CD4-positive, alpha-beta memory T cell (primary cell): ENCODE measurements at regions of chr16 and their contacts with region 1.

Region 1: GRCh38 chr16:23435500-23435899 is 17.5 kb downstream of the COG7 start:
- DNase-seq: peak; percentile 56 to 71 (median 56)
- H3K4me3 ChIP-seq: no peak overlapping the region
- H3K4me3 Mint-ChIP-seq: no peak overlapping the region
- H3K27ac ChIP-seq: no peak overlapping the region
- H3K27ac Mint-ChIP-seq: peak overlapping the region in 2 of 7 donors; percentile 23 to 64
- H3K4me1 ChIP-seq: peaks cover 4% of the 10 kb centered on the region
- H3K4me1 Mint-ChIP-seq: peaks cover 0 to 13% (median 6%) of the 10 kb centered on the region in 4 donors
- H3K27me3 ChIP-seq: no peaks in the 10 kb centered on the region
- H3K27me3 Mint-ChIP-seq: no peaks in the 10 kb centered on the region

Region 2: GRCh38 chr16:22898874-22899348 is 536.6 kb before region 1 on chr16:
- CTCF ChIA-PET with region 1: no interaction called
- POLR2A ChIA-PET with region 1: no interaction called
- intact Hi-C with region 1: loop called (anchors 10 kb)
- DNase-seq: peak in 3 of 5 donors; percentile 5 to 12 (median 6)
- H3K4me3 ChIP-seq: no peak overlapping the region
- H3K4me3 Mint-ChIP-seq: no peak overlapping the region
- H3K27ac ChIP-seq: no peak overlapping the region
- H3K27ac Mint-ChIP-seq: no peak overlapping the region
- H3K4me1 ChIP-seq: no peaks in the 10 kb centered on the region
- H3K4me1 Mint-ChIP-seq: no peaks in the 10 kb centered on the region
- H3K27me3 ChIP-seq: peaks cover 4% of the 10 kb centered on the region
- H3K27me3 Mint-ChIP-seq: peaks cover 13 to 18% of the 10 kb centered on the region in 2 donors

Region 3: DNA sequence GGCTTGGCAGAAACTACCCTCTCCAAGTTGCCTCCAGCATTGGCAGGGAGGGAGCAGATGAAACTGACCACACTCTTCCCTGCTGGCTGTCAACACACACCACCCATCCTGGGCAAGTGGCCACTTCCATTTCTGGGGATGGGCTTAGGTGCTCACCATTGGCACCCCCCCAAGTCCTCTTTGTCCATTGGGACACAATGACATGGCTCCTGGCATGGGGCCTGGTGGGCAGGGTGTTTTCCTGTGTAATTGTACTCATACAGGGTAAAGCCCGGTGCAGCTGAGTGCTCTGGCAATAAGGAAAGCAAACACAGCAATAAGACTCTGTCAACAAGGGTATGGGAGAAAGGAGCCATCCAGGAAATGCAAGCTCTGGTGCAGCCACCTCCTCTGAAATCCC is 110.8 kb before region 1 on chr16:
- CTCF ChIA-PET with region 1: no interaction called
- POLR2A ChIA-PET with region 1: no interaction called
- intact Hi-C with region 1: no loop called
- DNase-seq: no peak
- H3K4me3 ChIP-seq: no peak overlapping the region
- H3K4me3 Mint-ChIP-seq: no peak overlapping the region
- H3K27ac ChIP-seq: no peak overlapping the region
- H3K27ac Mint-ChIP-seq: peak overlapping the region in 1 of 7 donors; percentile 20
- H3K4me1 ChIP-seq: no peaks in the 10 kb centered on the region
- H3K4me1 Mint-ChIP-seq: no peaks in the 10 kb centered on the region
- H3K27me3 ChIP-seq: no peaks in the 10 kb centered on the region
- H3K27me3 Mint-ChIP-seq: peaks cover 1 to 5% of the 10 kb centered on the region in 2 donors

Region 4: DNA sequence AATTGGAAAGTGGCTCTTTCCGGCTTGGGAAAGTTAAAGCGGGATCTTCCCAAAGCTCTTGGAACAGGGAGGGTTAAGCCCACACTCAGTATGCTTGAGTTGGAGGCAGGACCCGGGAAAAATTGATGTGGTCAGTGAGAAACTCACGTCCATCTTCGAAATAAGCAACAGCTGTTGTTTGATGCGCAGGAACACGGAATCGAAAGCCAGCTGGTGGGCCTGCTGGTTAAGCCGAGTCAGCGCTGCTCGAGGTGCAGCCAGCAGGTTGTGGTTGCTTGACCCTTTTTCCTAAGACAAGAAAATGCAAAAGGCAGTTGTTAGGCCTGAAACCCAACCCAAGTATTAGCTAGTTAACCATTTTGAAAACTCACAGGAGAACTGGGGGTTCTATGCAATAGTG is 32.0 kb before region 1 on chr16:
- CTCF ChIA-PET with region 1: interaction called, 14 read pairs
- POLR2A ChIA-PET with region 1: no interaction called
- intact Hi-C with region 1: no loop called
- DNase-seq: no peak
- H3K4me3 ChIP-seq: no peak overlapping the region
- H3K4me3 Mint-ChIP-seq: no peak overlapping the region
- H3K27ac ChIP-seq: no peak overlapping the region
- H3K27ac Mint-ChIP-seq: no peak overlapping the region
- H3K4me1 ChIP-seq: no peaks in the 10 kb centered on the region
- H3K4me1 Mint-ChIP-seq: no peaks in the 10 kb centered on the region
- H3K27me3 ChIP-seq: no peaks in the 10 kb centered on the region
- H3K27me3 Mint-ChIP-seq: no peaks in the 10 kb centered on the region

Region 5: DNA sequence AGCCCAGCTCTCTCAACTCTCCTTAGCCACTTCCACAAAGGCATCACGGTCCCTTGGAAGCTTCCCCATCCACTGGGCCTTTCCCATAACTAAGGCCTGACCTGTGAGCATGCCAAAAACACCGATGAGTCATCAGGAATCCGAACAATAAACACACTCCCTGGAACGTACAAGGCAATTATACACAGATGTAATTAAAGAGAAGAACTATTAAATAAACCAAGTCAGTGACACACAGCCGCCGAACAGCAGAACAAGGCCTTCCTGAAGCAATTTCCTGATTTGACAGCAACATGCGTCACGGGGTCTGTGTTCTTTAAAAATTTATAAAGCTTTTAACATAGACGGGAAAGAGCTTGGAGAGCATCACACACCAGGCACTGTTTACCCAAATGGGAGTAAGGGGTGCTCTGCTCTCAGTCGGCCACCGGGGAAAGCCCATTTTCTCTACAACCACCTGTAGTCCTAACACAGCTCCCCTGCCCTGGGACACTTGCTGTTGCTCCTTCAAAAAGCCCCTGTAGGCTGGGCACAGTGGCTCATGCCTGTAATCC is 11.9 kb before region 1 on chr16:
- CTCF ChIA-PET with region 1: interaction called, 42 read pairs
- POLR2A ChIA-PET with region 1: no interaction called
- intact Hi-C with region 1: no loop called
- DNase-seq: no peak
- H3K4me3 ChIP-seq: no peak overlapping the region
- H3K4me3 Mint-ChIP-seq: peak overlapping the region in 1 of 8 donors; percentile 27
- H3K27ac ChIP-seq: no peak overlapping the region
- H3K27ac Mint-ChIP-seq: no peak overlapping the region
- H3K4me1 ChIP-seq: no peaks in the 10 kb centered on the region
- H3K4me1 Mint-ChIP-seq: no peaks in the 10 kb centered on the region
- H3K27me3 ChIP-seq: no peaks in the 10 kb centered on the region
- H3K27me3 Mint-ChIP-seq: no peaks in the 10 kb centered on the region

Region 6: GRCh38 chr16:23478566-23479537 is 43.4 kb after region 1 on chr16:
- CTCF ChIA-PET with region 1: interaction called, 17 read pairs
- POLR2A ChIA-PET with region 1: no interaction called
- intact Hi-C with region 1: no loop called
- DNase-seq: no peak
- H3K4me3 ChIP-seq: no peak overlapping the region
- H3K4me3 Mint-ChIP-seq: no peak overlapping the region
- H3K27ac ChIP-seq: no peak overlapping the region
- H3K27ac Mint-ChIP-seq: peak overlapping the region in 6 of 7 donors; percentile 24 to 90 (median 48)
- H3K4me1 ChIP-seq: peaks cover 6% of the 10 kb centered on the region
- H3K4me1 Mint-ChIP-seq: peaks cover 0 to 11% (median 3%) of the 10 kb centered on the region in 4 donors
- H3K27me3 ChIP-seq: no peaks in the 10 kb centered on the region
- H3K27me3 Mint-ChIP-seq: no peaks in the 10 kb centered on the region